PC-9 (cell line): ENCODE measurements at regions of chr2 and their contacts with region 1.

Region 1: GRCh38 chr2:134897932-134898331 is 20.7 kb upstream of the CCNT2 start:
- DNase-seq: no peak
- H3K4me3 ChIP-seq: no peak overlapping the region
- H3K27ac ChIP-seq: no peak overlapping the region
- H3K4me1 ChIP-seq: no peaks in the 10 kb centered on the region
- H3K27me3 ChIP-seq: no peaks in the 10 kb centered on the region
- CTCF ChIP-seq: peak; percentile 67

Region 2: GRCh38 chr2:134460583-134460998 is 437.3 kb before region 1 on chr2:
- CTCF ChIA-PET with region 1: interaction called, 3 read pairs
- POLR2A ChIA-PET with region 1: no interaction called
- intact Hi-C with region 1: loop called (anchors 1 kb)
- DNase-seq: peak; percentile 55 to 67
- H3K4me3 ChIP-seq: no peak overlapping the region
- H3K27ac ChIP-seq: no peak overlapping the region
- H3K4me1 ChIP-seq: no peaks in the 10 kb centered on the region
- H3K27me3 ChIP-seq: no peaks in the 10 kb centered on the region
- CTCF ChIP-seq: peak; percentile 81

Region 3: DNA sequence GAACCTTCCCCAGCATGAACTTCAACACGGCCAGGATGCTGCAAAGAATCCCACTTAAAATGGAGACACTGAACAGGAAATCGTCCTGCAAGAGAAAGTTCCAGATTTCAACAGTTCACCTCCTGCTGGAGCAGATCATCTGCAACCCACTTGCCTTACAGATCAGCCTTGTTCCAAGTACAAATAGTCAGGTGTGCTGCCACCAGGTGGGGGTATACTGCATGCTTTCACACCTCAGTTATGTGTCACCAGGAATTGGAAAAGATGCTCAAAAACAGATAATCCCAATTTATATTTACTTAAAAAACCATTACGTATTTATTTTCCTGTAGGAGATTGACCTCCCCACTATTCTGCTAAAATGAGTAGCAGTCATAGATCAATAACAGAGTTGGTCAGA is 431.8 kb before region 1 on chr2:
- CTCF ChIA-PET with region 1: interaction called, 3 read pairs
- POLR2A ChIA-PET with region 1: no interaction called
- intact Hi-C with region 1: loop called (anchors 1 kb)
- DNase-seq: peak; percentile 39 to 45
- H3K4me3 ChIP-seq: no peak overlapping the region
- H3K27ac ChIP-seq: no peak overlapping the region
- H3K4me1 ChIP-seq: no peaks in the 10 kb centered on the region
- H3K27me3 ChIP-seq: no peaks in the 10 kb centered on the region
- CTCF ChIP-seq: peak; percentile 80

Region 4: GRCh38 chr2:134657637-134658250 is 240.2 kb before region 1 on chr2:
- CTCF ChIA-PET with region 1: no interaction called
- POLR2A ChIA-PET with region 1: no interaction called
- intact Hi-C with region 1: loop called (anchors 5 kb)
- DNase-seq: peak in 1 of 2 experiments; percentile 15
- H3K4me3 ChIP-seq: no peak overlapping the region
- H3K27ac ChIP-seq: no peak overlapping the region
- H3K4me1 ChIP-seq: no peaks in the 10 kb centered on the region
- H3K27me3 ChIP-seq: no peaks in the 10 kb centered on the region
- CTCF ChIP-seq: peak; percentile 87